ENCODE measurements at regions of chr17 and their contacts with region 1.

Region 1: GRCh38 chr17:38421171-38421841 is 7.0 kb upstream of the ARHGAP23 start:
- DNase-seq: no peak
- ATAC-seq: no peak; the same call in 1 of the 2 replicates
- H3K4me3 Mint-ChIP-seq: peak overlapping the region; percentile 22
- H3K27ac Mint-ChIP-seq: no peak overlapping the region
- H3K4me1 Mint-ChIP-seq: peaks cover 70% of the 10 kb centered on the region
- H3K27me3 Mint-ChIP-seq: peaks cover 38% of the 10 kb centered on the region
- CTCF ChIP-seq: no peak

Region 2: DNA sequence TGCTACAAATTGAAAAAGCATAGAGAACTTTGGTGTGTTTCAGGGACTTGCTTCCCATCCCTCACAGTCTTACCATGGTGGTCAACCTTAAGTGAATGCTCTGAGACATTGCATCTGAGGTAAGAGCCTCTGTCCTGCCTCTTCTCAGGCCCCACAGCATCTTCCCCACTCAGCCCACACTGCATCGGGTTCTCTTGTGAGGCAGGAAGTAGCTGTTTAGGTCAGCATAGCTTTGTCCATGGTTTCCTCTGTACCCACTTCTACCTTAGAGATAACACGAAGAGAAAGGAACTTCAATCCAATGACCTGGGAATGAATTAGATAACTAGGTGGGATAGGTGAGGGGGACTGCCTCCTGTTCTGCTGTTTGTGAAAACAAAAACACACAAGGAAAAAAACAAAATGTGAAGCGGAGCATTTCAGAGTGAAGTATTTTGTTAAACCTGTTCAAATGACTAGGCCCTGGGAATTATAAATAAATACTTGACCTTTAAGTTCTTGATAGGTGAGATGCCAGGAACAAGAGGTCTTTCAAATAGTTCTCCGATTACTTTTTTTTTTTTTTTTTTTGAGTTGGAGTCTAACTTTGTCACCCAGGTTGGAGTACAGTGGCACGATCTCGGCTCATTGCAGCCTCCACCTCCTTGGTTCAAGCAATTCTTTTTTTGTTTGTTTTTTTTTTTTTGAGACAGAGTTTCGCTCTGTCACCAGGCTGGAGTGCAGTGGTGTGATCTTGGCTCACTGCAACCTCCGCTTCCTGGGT is 52.0 kb before region 1 on chr17:
- CTCF ChIA-PET with region 1: no interaction called
- POLR2A ChIA-PET with region 1: no interaction called
- DNase-seq: no peak
- ATAC-seq: no peak
- H3K4me3 Mint-ChIP-seq: no peak overlapping the region
- H3K27ac Mint-ChIP-seq: no peak overlapping the region
- H3K4me1 Mint-ChIP-seq: no peaks in the 10 kb centered on the region
- H3K27me3 Mint-ChIP-seq: no peaks in the 10 kb centered on the region
- CTCF ChIP-seq: no peak

Region 3: GRCh38 chr17:38434178-38434665 is 12.9 kb after region 1 on chr17:
- CTCF ChIA-PET with region 1: interaction called, 14 read pairs
- POLR2A ChIA-PET with region 1: no interaction called
- DNase-seq: no peak
- ATAC-seq: no peak
- H3K4me3 Mint-ChIP-seq: no peak overlapping the region
- H3K27ac Mint-ChIP-seq: no peak overlapping the region
- H3K4me1 Mint-ChIP-seq: peaks cover 59% of the 10 kb centered on the region
- H3K27me3 Mint-ChIP-seq: no peaks in the 10 kb centered on the region
- CTCF ChIP-seq: no peak

Region 4: DNA sequence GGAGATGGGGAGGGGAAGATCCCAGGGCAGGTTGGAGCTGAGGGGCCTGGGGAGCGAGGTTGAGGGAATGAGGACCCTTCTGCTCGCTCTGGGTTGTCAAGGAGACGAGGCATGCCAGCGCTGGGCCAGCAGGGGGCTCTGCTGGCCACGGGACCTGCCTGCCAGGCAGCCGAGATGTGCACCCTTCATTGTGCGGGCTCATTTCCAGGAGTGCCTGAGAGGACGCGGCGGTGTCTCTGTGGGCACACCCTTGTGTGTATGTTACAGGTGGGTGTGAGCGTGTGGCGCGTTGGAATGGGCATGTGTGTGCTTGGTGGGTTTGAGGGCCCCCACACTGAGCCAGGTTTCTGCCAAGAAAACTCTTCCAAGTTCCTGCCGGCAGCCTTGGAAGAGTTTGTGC is 22.8 kb after region 1 on chr17:
- CTCF ChIA-PET with region 1: interaction called, 70 read pairs
- POLR2A ChIA-PET with region 1: interaction called, 3 read pairs
- DNase-seq: peak; percentile 76
- ATAC-seq: peak; percentile 70
- H3K4me3 Mint-ChIP-seq: no peak overlapping the region
- H3K27ac Mint-ChIP-seq: no peak overlapping the region
- H3K4me1 Mint-ChIP-seq: peaks cover 57% of the 10 kb centered on the region
- H3K27me3 Mint-ChIP-seq: no peaks in the 10 kb centered on the region
- CTCF ChIP-seq: peak; percentile 78

Region 5: DNA sequence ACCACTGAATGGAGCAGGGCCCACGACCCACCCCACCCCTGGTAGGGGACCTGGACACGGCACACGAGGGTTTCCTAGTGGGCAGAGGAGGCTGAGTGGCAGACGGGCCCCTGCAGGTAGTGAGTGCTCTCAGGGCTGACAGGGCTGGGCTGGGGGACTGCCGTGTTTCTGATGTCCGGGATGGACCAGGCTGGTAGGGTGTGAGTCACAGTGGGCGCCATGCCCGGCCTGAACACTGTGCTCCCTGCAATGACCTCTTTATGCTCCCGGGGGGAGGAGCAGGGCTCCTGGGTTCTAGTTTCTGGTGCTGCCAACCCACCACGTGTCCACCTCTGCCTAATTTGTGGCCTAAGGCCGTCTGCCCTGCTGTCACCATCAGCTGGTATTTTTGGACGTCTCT is 33.2 kb after region 1 on chr17:
- CTCF ChIA-PET with region 1: interaction called, 70 read pairs
- POLR2A ChIA-PET with region 1: interaction called, 26 read pairs
- DNase-seq: no peak
- ATAC-seq: no peak
- H3K4me3 Mint-ChIP-seq: peak overlapping the region; percentile 62
- H3K27ac Mint-ChIP-seq: peak overlapping the region; percentile 84
- H3K4me1 Mint-ChIP-seq: peaks cover 65% of the 10 kb centered on the region
- H3K27me3 Mint-ChIP-seq: 0 out of 2 replicates have a peak, but pooled peaks cover 2% of the 10 kb centered on the region
- CTCF ChIP-seq: no peak

Region 6: DNA sequence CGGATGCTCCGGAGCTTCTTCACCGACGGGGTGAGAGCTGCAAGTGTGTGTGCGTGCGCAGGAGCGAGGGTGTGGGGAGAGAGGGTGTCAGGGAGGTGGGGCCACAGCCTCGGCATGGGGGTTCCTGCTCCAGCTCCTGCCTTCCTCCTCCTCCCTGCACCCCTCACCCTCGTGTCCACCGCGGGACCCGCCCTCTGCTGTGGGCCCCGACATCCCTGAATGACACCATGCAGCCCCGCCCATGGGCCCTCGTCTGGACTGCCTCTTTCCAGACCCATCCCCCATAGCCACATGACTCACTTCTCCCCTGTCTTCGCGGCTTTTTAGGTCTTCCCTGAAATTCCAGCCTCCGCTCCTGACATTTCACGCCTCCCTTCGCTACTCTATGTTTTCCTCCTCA is 48.6 kb after region 1 on chr17:
- CTCF ChIA-PET with region 1: interaction called, 12 read pairs
- POLR2A ChIA-PET with region 1: no interaction called
- DNase-seq: no peak
- ATAC-seq: no peak
- H3K4me3 Mint-ChIP-seq: no peak overlapping the region
- H3K27ac Mint-ChIP-seq: peak overlapping the region; percentile 79; the same call in 1 of the 2 replicates
- H3K4me1 Mint-ChIP-seq: peaks cover 20% of the 10 kb centered on the region
- H3K27me3 Mint-ChIP-seq: no peaks in the 10 kb centered on the region
- CTCF ChIP-seq: no peak